ENCODE measurements at regions of chr1 and their contacts with region 1.

Region 1: GRCh38 chr1:20633190-20634064 is at the start of gene PINK1:
- DNase-seq: peak; percentile 75 to 97 (median 87)
- ATAC-seq: peak; percentile 92 to 96 (median 94)
- H3K4me3 ChIP-seq: peak within 1 kb of the TSS; percentile 71 to 98 (median 94)
- H3K27ac ChIP-seq: peak within 1 kb of the TSS; percentile 73 to 90 (median 82)
- H3K4me1 ChIP-seq: peaks cover 0 to 7% (median 0%) of the 10 kb centered on the region in 3 donors
- H3K27me3 ChIP-seq: no peaks in the 10 kb centered on the region
- CTCF ChIP-seq: peak; percentile 96 to 99 (median 98)
- total RNA-seq, gene PINK1: 15.6 to 33.4 (median 27.7) TPM

Region 2: GRCh38 chr1:20521960-20522861 is 111.2 kb before region 1 on chr1:
- intact Hi-C with region 1: loop called in 2 of 3 experiments (anchors 5 to 10 kb)
- DNase-seq: peak; percentile 56 to 84 (median 69)
- ATAC-seq: peak; percentile 77 to 98 (median 96)
- H3K4me3 ChIP-seq: peak overlapping the region in 2 of 4 donors; percentile 18 to 20
- H3K27ac ChIP-seq: no peak overlapping the region
- H3K4me1 ChIP-seq: no peaks in the 10 kb centered on the region
- H3K27me3 ChIP-seq: peaks cover 0 to 5% (median 0%) of the 10 kb centered on the region in 4 donors
- CTCF ChIP-seq: peak; percentile 72 to 85 (median 79)

Region 3: DNA sequence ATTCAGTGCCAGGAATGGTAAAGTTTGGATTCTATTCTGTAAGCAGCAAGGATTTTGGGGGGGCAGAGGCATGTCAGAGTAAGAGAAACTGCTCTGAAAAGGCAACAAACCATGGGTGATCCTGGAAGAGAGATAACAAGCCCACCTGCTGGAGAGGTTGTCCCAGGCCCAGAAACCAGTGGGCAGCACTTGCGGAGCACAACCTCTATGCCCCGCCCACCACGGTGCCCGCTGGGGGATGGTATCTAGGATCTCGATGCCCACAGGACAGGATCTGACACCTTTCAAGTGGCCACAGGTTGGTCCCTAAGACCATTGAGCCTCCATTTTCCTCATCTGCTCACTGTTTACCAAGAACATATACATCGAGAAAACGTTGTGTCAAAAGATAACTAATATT is 105.2 kb before region 1 on chr1:
- intact Hi-C with region 1: loop called in 2 of 3 experiments (anchors 5 to 10 kb)
- DNase-seq: no peak
- ATAC-seq: no peak
- H3K4me3 ChIP-seq: no peak overlapping the region
- H3K27ac ChIP-seq: no peak overlapping the region
- H3K4me1 ChIP-seq: no peaks in the 10 kb centered on the region
- H3K27me3 ChIP-seq: peaks cover 0 to 11% (median under 1%) of the 10 kb centered on the region in 4 donors
- CTCF ChIP-seq: no peak